A673 (cell line): ENCODE measurements at regions of chrX and their contacts with region 1.

Region 1: DNA sequence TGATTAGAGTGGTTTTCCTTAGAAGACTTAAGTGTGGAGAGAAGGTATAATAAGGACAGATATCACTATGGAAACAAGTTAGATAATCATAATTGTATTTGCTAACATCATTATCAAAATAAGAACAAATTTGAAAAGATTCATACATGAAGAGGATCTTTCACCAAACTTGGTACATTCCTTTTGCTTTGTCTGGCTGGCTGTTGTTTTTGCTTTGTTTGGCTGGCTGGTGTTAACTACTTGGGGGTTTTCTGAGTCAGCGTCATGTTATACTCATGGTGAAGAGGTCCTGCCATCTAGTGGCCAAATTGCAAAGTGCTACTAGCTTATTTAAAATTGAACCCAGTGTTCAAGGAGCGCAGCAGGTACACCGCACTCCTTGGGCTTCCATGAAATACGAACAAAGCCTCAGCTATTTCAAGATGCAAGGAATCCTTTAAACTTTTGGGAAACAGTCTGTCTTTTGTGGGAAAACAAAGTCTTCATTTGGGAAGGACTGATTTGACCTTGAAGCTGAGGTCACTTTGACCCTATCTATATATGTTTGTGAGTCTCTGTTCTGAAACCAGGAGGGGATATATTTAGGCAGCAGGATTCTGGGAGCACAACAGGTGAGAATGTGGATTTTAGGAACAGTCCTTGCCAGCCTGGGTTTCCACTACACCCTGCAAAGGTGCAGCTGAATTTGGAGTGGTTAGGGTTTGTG is 129.7 kb downstream of the PLS3 start:
- DNase-seq: peak; percentile 84
- H3K4me3 ChIP-seq: no peak overlapping the region
- H3K27ac ChIP-seq: no peak overlapping the region
- H3K4me1 ChIP-seq: no peaks in the 10 kb centered on the region
- H3K27me3 ChIP-seq: peaks cover 15% of the 10 kb centered on the region
- CTCF ChIP-seq: peak; percentile 88

Region 2: DNA sequence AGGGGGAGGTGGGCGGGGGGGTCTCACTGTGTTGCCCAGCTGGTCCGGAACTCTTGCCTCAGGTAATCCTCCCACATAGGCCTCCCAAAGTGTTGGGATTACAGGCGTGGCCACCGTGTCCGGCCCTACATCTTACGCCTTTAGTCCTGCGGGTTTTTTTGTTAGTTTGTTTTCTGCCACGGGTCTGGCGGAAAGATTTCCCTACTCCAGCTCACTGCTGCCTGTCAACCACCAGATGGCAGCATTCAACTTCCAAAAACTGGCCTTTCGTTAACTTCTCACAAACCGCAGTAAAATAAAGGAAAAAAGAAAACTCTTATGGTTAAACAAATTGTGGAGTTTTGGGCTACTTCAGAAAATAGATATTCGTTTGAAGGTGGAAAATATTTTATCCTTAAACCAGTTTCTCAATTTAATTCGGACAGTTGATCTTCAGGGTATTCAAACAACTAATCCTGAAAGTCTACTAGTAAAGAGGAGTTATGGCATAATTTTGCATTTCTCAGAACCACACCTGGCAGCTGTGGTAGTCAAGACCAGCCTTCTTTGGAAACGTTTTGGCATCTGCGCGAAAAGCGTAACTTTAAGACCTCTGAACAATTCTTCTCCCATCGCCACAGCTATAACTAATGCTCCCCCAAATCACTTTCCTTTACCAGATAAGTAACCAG is 360.0 kb before region 1 on chrX:
- CTCF ChIA-PET with region 1: no interaction called
- POLR2A ChIA-PET with region 1: no interaction called
- intact Hi-C with region 1: loop called (anchors 5 kb)
- DNase-seq: peak; percentile 74
- H3K4me3 ChIP-seq: no peak overlapping the region
- H3K27ac ChIP-seq: no peak overlapping the region
- H3K4me1 ChIP-seq: no peaks in the 10 kb centered on the region
- H3K27me3 ChIP-seq: no peaks in the 10 kb centered on the region
- CTCF ChIP-seq: peak; percentile 92

Region 3: DNA sequence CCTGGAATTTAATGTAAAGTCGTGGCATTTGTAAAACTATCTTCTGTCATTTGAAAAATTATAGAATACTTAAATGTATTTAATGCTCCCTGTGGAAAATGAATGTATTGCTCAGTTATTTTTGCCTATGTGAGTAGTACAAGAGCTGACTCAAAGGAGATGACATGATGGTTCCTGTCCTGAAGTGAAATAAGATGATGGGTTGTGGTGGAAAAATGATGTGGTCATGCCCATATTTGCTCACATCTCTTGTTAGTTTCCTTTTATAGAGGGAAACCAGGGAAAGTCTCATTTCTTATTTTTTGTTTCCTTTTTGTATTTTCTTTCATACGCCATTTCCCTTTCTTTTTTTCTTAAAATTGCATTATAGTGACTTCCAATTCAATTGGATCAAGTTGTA is 106.0 kb before region 1 on chrX:
- CTCF ChIA-PET with region 1: no interaction called
- POLR2A ChIA-PET with region 1: no interaction called
- intact Hi-C with region 1: no loop called
- DNase-seq: no peak
- H3K4me3 ChIP-seq: no peak overlapping the region
- H3K27ac ChIP-seq: no peak overlapping the region
- H3K4me1 ChIP-seq: peaks cover 41% of the 10 kb centered on the region
- H3K27me3 ChIP-seq: peaks cover 40% of the 10 kb centered on the region
- CTCF ChIP-seq: no peak

Region 4: DNA sequence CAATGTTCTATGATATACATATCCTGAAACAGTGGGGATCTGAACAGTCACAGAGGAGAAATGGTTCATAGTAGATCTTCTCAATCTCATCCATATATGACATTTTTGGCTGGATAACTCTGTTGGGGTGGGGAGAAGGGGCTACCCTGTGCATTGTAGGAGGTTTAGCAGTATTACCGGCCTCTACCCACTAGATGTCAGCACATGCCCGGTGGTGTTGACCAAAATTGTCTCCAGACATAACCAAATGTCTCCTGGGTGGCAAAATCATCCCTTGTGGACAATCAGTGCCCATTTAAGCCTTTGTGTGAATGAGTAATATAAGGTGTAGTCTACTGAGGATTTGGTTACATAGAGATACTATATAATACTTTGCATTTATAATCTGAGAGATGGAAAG is 39.7 kb before region 1 on chrX:
- CTCF ChIA-PET with region 1: no interaction called
- POLR2A ChIA-PET with region 1: no interaction called
- intact Hi-C with region 1: loop called (anchors 2 kb)
- DNase-seq: peak; percentile 80
- H3K4me3 ChIP-seq: no peak overlapping the region
- H3K27ac ChIP-seq: peak overlapping the region; percentile 70
- H3K4me1 ChIP-seq: peaks cover 9% of the 10 kb centered on the region
- H3K27me3 ChIP-seq: peaks cover 8% of the 10 kb centered on the region
- CTCF ChIP-seq: peak; percentile 77